ENCODE measurements at regions of chr7 and their contacts with region 1.

Region 1: GRCh38 chr7:132394283-132395198 is 181.7 kb downstream of the PLXNA4 start:
- DNase-seq: no peak
- ATAC-seq: peak in 6 of 8 donors; percentile 18 to 46 (median 24)
- H3K4me3 ChIP-seq: no peak overlapping the region
- H3K27ac ChIP-seq: peak overlapping the region in 1 of 10 donors; percentile 17
- H3K4me1 ChIP-seq: peaks cover 4 to 48% (median 27%) of the 10 kb centered on the region in 9 donors
- H3K27me3 ChIP-seq: no peaks in the 10 kb centered on the region
- CTCF ChIP-seq: peak in 6 of 9 donors; percentile 37 to 55 (median 49)

Region 2: GRCh38 chr7:132345543-132346129 is 48.9 kb before region 1 on chr7:
- intact Hi-C with region 1: no loop called
- DNase-seq: no peak
- ATAC-seq: peak in 6 of 8 donors; percentile 32 to 64 (median 40)
- H3K4me3 ChIP-seq: no peak overlapping the region
- H3K27ac ChIP-seq: peak overlapping the region in 2 of 10 donors; percentile 21 to 25
- H3K4me1 ChIP-seq: peaks cover 0 to 19% (median 5%) of the 10 kb centered on the region in 9 donors
- H3K27me3 ChIP-seq: peaks cover 0 to 3% (median 0%) of the 10 kb centered on the region in 7 donors
- CTCF ChIP-seq: no peak

Region 3: DNA sequence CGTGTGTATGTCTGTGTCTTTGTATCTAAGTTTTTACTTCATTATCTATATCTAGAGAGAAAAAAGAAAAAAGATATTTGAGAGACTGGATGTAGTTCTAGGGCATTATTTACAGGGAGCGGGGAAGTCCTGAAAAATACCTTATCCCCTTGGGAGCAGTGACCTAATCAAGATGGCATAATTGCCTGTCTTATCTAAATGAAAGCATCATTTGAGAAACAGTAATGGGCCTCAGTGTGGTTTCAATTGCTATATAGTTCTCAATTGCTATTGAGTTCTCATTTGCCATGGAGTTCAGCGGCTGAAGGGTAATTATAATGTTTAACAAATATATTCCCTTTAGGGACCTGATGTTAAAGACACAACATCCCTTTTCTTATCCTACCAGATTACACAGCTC is 34.8 kb before region 1 on chr7:
- intact Hi-C with region 1: no loop called
- DNase-seq: no peak
- ATAC-seq: no peak
- H3K4me3 ChIP-seq: no peak overlapping the region
- H3K27ac ChIP-seq: no peak overlapping the region
- H3K4me1 ChIP-seq: no peaks in the 10 kb centered on the region
- H3K27me3 ChIP-seq: no peaks in the 10 kb centered on the region
- CTCF ChIP-seq: no peak

Region 4: GRCh38 chr7:132489776-132490237 is 95.3 kb after region 1 on chr7:
- intact Hi-C with region 1: loop called in 1 of 10 experiments (anchors 10 kb)
- DNase-seq: no peak
- ATAC-seq: no peak
- H3K4me3 ChIP-seq: no peak overlapping the region
- H3K27ac ChIP-seq: no peak overlapping the region
- H3K4me1 ChIP-seq: peaks cover 0 to 53% (median 21%) of the 10 kb centered on the region in 9 donors
- H3K27me3 ChIP-seq: no peaks in the 10 kb centered on the region
- CTCF ChIP-seq: no peak

Region 5: GRCh38 chr7:132654150-132654549 is 259.6 kb after region 1 on chr7:
- intact Hi-C with region 1: no loop called
- DNase-seq: no peak
- ATAC-seq: no peak
- H3K4me3 ChIP-seq: no peak overlapping the region
- H3K27ac ChIP-seq: no peak overlapping the region
- H3K4me1 ChIP-seq: peaks cover 0 to 25% (median 8%) of the 10 kb centered on the region in 9 donors
- H3K27me3 ChIP-seq: no peaks in the 10 kb centered on the region
- CTCF ChIP-seq: peak in 4 of 9 donors; percentile 18 to 28 (median 24)